Caco-2 (cell line): ENCODE measurements at regions of chr1 and their contacts with region 1.

Region 1: DNA sequence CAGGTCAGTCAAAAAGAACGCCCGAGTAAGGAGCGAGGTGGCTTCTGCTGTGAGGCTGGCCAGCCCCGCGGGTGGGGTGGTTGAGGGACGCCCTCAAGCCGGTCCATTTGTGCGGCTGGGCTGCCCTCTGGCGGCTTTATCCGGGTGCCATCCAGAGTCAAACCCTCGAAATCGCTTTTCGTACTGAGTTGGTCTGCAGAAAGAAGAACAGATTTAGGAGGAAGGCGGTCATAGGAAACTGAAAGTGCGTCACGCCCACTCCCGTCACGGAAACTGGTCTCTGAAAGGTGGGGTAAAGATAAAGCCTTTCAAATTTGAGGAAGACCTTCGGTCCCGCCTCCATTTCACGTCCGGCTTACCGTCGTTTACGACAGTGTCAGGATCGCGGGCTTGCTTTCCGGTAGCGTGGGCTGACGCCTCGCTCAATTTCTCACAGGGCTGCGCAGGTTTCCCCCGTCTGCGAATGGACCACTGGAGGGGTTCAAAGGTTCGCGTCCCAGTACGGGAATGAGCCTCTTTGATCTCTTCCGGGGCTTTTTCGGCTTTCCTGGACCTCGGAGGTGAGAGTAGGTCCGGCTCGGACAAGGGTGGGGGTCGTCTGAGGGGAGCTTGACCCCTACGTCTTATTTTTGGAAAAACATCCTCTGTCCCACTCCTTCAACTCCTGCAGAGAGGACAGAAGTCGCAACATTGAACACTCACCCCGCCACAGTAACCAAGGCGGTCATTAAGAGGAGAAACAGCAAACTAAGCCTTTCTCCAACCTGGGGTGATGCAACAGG is at the start of gene HAX1:
- DNase-seq: peak; percentile 93 to 94
- H3K4me3 ChIP-seq: peak within 1 kb of the TSS; percentile 54
- H3K4me3 Mint-ChIP-seq: peak within 1 kb of the TSS; percentile 88
- H3K27ac Mint-ChIP-seq: peak within 1 kb of the TSS; percentile 98
- H3K4me1 ChIP-seq: no peaks in the 10 kb centered on the region
- H3K4me1 Mint-ChIP-seq: peaks cover 22% of the 10 kb centered on the region
- H3K27me3 ChIP-seq: no peaks in the 10 kb centered on the region
- H3K27me3 Mint-ChIP-seq: no peaks in the 10 kb centered on the region
- CTCF ChIP-seq: peak; percentile 82 to 87
- total RNA-seq, gene HAX1: 135 and 138 TPM in 2 replicates

Region 2: DNA sequence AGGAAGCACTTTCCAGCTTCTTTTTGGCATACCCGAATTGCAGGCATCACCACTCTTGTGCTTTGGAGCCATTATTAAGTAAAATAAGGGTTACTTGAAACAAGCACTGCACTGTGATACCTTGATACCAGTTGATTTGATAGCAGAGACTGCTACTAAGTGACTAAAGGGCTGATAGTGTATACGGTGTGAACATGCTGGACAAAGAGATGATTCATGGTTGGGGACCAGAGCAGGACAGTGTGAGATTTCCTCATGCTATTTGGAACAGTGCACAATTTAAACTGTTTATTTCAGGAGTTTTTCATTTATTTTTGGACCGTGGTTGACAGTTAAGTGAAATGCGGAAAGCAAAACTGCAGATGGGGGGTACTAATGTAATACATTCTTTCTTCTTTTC is 272.0 kb before region 1 on chr1:
- CTCF ChIA-PET with region 1: no interaction called
- POLR2A ChIA-PET with region 1: no interaction called
- intact Hi-C with region 1: loop called (anchors 5 kb)
- DNase-seq: no peak
- H3K4me3 ChIP-seq: no peak overlapping the region
- H3K4me3 Mint-ChIP-seq: no peak overlapping the region
- H3K27ac Mint-ChIP-seq: peak overlapping the region; percentile 97
- H3K4me1 ChIP-seq: peaks cover 32% of the 10 kb centered on the region
- H3K4me1 Mint-ChIP-seq: peaks cover 16% of the 10 kb centered on the region
- H3K27me3 ChIP-seq: no peaks in the 10 kb centered on the region
- H3K27me3 Mint-ChIP-seq: no peaks in the 10 kb centered on the region
- CTCF ChIP-seq: no peak

Region 3: DNA sequence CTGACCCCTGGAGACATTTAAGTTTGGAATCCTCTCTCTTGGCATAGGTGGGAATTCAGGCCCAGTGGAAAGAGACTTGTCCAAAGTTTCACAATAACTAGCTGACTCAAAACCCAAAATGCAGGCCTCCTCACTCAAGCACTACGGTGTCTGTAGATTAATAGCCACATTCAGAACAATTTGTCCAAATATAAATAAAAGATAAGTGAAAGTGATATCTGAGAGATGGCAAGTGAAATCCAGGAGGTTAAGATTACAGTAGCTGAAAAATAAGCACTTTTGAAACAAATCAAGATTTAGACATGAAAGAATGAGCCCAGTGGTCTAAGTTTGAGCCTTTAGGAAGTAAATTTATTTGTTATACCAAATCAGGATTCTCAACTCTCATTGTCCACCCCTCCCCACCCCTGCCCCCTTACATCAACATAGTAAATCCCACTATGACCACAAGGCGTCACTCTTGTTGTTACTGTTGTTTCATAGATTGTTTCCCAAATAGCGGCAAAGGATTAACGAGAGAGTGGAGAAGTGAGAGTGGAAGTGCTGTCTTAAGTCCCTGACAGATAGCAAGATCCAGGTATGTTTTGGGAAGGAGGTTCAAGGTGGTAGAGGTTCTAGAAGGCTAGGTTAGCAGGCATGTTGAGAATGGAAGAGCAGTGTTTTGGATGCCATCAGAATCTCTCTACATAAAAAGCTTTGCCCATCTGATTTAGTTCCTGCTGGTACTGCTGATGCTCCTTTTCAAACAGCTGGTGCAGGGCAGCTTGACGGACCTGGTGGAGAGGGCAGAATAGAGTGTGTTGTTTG is 73.4 kb before region 1 on chr1:
- CTCF ChIA-PET with region 1: interaction called, 7 read pairs
- POLR2A ChIA-PET with region 1: no interaction called
- intact Hi-C with region 1: loop called (anchors 1 kb)
- DNase-seq: peak; percentile 47 to 54
- H3K4me3 ChIP-seq: no peak overlapping the region
- H3K4me3 Mint-ChIP-seq: no peak overlapping the region
- H3K27ac Mint-ChIP-seq: no peak overlapping the region
- H3K4me1 ChIP-seq: 0 out of 2 replicates have a peak, but pooled peaks cover 3% of the 10 kb centered on the region
- H3K4me1 Mint-ChIP-seq: peaks cover 7% of the 10 kb centered on the region
- H3K27me3 ChIP-seq: no peaks in the 10 kb centered on the region
- H3K27me3 Mint-ChIP-seq: no peaks in the 10 kb centered on the region
- CTCF ChIP-seq: peak; percentile 62 to 63

Region 4: GRCh38 chr1:154236855-154237254 is 35.6 kb before region 1 on chr1:
- CTCF ChIA-PET with region 1: no interaction called
- POLR2A ChIA-PET with region 1: no interaction called
- intact Hi-C with region 1: loop called (anchors 1 kb)
- DNase-seq: no peak
- H3K4me3 ChIP-seq: no peak overlapping the region
- H3K4me3 Mint-ChIP-seq: peak overlapping the region; percentile 6
- H3K27ac Mint-ChIP-seq: no peak overlapping the region
- H3K4me1 ChIP-seq: peaks cover 27% of the 10 kb centered on the region
- H3K4me1 Mint-ChIP-seq: peaks cover 27% of the 10 kb centered on the region
- H3K27me3 ChIP-seq: no peaks in the 10 kb centered on the region
- H3K27me3 Mint-ChIP-seq: no peaks in the 10 kb centered on the region
- CTCF ChIP-seq: no peak

Region 5: DNA sequence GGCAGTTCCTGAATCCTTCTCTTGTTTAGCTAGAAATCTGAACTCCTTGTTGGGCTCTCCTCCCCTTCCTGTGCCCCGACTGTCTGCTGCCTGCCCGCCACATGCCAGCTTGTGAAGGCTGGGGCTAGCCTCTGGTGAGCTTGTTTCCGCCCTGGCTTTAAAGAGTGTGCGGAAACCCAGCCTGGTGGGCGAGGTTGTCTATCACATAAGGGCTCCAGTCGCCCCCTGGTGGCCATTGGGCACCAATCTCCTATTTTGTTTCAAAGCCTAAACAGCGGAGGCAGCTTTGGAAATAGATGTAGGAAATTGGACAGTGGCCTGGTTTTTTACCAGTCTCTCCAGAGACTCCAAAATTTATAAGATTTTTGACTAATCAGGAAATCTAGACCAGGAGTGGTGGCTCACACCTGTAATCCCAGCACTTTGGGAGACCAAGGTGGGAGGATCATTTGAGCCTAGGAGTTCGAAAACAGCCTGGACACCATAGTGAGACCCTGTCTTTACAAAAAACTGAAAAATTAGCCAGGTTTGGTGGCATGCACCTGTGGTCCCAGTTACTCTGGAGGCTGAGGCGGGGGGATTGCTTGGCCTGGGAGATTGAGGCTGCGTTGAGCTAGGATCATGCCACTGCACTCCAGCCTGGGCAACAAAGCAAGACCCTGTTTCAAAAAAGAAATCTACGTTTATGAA is 62.8 kb after region 1 on chr1:
- CTCF ChIA-PET with region 1: interaction called, 21 read pairs
- POLR2A ChIA-PET with region 1: no interaction called
- intact Hi-C with region 1: loop called (anchors 1 kb)
- DNase-seq: peak; percentile 86 to 88
- H3K4me3 ChIP-seq: no peak overlapping the region
- H3K4me3 Mint-ChIP-seq: peak overlapping the region; percentile 61
- H3K27ac Mint-ChIP-seq: peak overlapping the region; percentile 61
- H3K4me1 ChIP-seq: peaks cover 7% of the 10 kb centered on the region
- H3K4me1 Mint-ChIP-seq: peaks cover 32% of the 10 kb centered on the region
- H3K27me3 ChIP-seq: no peaks in the 10 kb centered on the region
- H3K27me3 Mint-ChIP-seq: no peaks in the 10 kb centered on the region
- CTCF ChIP-seq: peak; percentile 88 to 89

Region 6: GRCh38 chr1:155105604-155106022 is 833.2 kb after region 1 on chr1:
- CTCF ChIA-PET with region 1: no interaction called
- POLR2A ChIA-PET with region 1: no interaction called
- intact Hi-C with region 1: loop called (anchors 10 kb)
- DNase-seq: peak in 1 of 2 experiments; percentile 34
- H3K4me3 ChIP-seq: no peak overlapping the region
- H3K4me3 Mint-ChIP-seq: no peak overlapping the region
- H3K27ac Mint-ChIP-seq: peak overlapping the region; percentile 0
- H3K4me1 ChIP-seq: peaks cover 28% of the 10 kb centered on the region
- H3K4me1 Mint-ChIP-seq: peaks cover 10% of the 10 kb centered on the region
- H3K27me3 ChIP-seq: no peaks in the 10 kb centered on the region
- H3K27me3 Mint-ChIP-seq: no peaks in the 10 kb centered on the region
- CTCF ChIP-seq: no peak